ENCODE measurements at regions of chr1 and their contacts with region 1.

Region 1: GRCh38 chr1:93304716-93305138 is 41.0 kb upstream of the DR1 start:
- DNase-seq: peak; percentile 86
- ATAC-seq: peak; percentile 75
- H3K4me3 ChIP-seq: no peak overlapping the region
- H3K27ac ChIP-seq: no peak overlapping the region
- H3K4me1 ChIP-seq: no peaks in the 10 kb centered on the region; the same call in 1 of the 2 replicates
- H3K27me3 ChIP-seq: no peaks in the 10 kb centered on the region
- CTCF ChIP-seq: peak; percentile 95

Region 2: DNA sequence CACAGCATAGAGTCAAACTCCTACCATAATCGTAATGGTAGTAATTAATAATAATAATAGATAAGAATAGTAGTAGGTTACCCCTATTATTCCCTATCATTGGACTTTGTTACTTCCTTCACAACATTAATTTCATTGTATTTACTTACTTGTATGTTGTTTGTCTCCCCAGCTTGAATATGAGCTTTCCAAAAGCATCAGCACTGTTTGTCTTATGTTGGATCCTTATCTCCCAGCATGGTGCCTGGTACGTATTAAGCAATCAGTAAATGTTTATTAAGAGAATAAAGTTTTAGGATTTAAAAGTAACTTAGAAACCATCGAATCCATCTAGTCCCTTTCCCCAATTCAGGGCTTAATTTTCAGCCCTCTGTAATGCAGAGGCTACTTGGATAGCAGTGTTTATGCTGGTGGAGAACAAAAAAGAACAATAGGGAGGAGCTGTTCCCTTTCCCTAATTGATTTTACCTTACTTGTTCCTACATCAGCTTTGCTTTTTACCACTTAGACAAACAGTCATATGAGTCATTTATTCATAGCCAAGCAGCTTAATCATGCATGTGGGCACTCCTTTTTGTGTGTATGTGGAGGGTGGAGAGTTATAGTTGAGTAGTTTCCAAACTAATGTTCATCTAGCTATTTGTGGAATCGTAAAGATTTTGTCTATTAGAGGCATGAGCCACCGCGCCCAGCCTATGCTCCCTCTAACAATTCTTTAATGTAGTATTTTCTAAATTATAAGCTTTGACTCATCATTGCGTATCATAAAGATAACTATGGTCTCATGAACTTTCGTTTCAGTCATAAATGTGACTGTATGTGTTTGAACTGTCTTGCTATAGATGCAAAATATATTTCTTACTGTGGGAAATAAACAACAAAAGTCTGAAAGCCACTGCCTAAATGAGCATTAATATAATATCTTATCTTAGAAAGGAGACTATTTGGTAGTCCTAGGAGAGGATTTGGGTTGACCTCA is 20.0 kb after region 1 on chr1:
- CTCF ChIA-PET with region 1: interaction called, 19 read pairs
- POLR2A ChIA-PET with region 1: interaction called, 6 read pairs
- intact Hi-C with region 1: loop called (anchors 2 kb)
- DNase-seq: peak; percentile 94
- ATAC-seq: peak; percentile 90
- H3K4me3 ChIP-seq: peak overlapping the region; percentile 54
- H3K27ac ChIP-seq: peak overlapping the region; percentile 87
- H3K4me1 ChIP-seq: peaks cover 58% of the 10 kb centered on the region
- H3K27me3 ChIP-seq: no peaks in the 10 kb centered on the region
- CTCF ChIP-seq: no peak

Region 3: GRCh38 chr1:93345633-93346420 is 41.1 kb after region 1 on chr1 and contains the start of gene DR1:
- CTCF ChIA-PET with region 1: interaction called, 7 read pairs
- POLR2A ChIA-PET with region 1: interaction called, 4 read pairs
- intact Hi-C with region 1: loop called (anchors 1 kb)
- DNase-seq: peak; percentile 94
- ATAC-seq: peak; percentile 87
- H3K4me3 ChIP-seq: peak within 1 kb of the TSS; percentile 97
- H3K27ac ChIP-seq: peak within 1 kb of the TSS; percentile 91
- H3K4me1 ChIP-seq: peaks cover 12% of the 10 kb centered on the region; the same call in 1 of the 2 replicates
- H3K27me3 ChIP-seq: no peaks in the 10 kb centered on the region
- CTCF ChIP-seq: no peak
- total RNA-seq, gene DR1: 34.8 and 48.6 TPM in 2 replicates

Region 4: GRCh38 chr1:93437976-93438605 is 133.4 kb after region 1 on chr1:
- CTCF ChIA-PET with region 1: no interaction called
- POLR2A ChIA-PET with region 1: no interaction called
- intact Hi-C with region 1: loop called (anchors 1 kb)
- DNase-seq: peak; percentile 84
- ATAC-seq: peak; percentile 75
- H3K4me3 ChIP-seq: peak overlapping the region; percentile 52
- H3K27ac ChIP-seq: no peak overlapping the region
- H3K4me1 ChIP-seq: peaks cover 17% of the 10 kb centered on the region
- H3K27me3 ChIP-seq: no peaks in the 10 kb centered on the region
- CTCF ChIP-seq: peak; percentile 83

Region 5: GRCh38 chr1:93552741-93553455 is 248.2 kb after region 1 on chr1:
- CTCF ChIA-PET with region 1: no interaction called
- POLR2A ChIA-PET with region 1: no interaction called
- intact Hi-C with region 1: loop called (anchors 5 kb)
- DNase-seq: no peak
- ATAC-seq: peak; percentile 50
- H3K4me3 ChIP-seq: no peak overlapping the region
- H3K27ac ChIP-seq: no peak overlapping the region
- H3K4me1 ChIP-seq: peaks cover 28% of the 10 kb centered on the region
- H3K27me3 ChIP-seq: no peaks in the 10 kb centered on the region
- CTCF ChIP-seq: no peak

Measured in PC-3 (cell line).